PC-9 (cell line): ENCODE measurements at regions of chr9 and their contacts with region 1.

Region 1: DNA sequence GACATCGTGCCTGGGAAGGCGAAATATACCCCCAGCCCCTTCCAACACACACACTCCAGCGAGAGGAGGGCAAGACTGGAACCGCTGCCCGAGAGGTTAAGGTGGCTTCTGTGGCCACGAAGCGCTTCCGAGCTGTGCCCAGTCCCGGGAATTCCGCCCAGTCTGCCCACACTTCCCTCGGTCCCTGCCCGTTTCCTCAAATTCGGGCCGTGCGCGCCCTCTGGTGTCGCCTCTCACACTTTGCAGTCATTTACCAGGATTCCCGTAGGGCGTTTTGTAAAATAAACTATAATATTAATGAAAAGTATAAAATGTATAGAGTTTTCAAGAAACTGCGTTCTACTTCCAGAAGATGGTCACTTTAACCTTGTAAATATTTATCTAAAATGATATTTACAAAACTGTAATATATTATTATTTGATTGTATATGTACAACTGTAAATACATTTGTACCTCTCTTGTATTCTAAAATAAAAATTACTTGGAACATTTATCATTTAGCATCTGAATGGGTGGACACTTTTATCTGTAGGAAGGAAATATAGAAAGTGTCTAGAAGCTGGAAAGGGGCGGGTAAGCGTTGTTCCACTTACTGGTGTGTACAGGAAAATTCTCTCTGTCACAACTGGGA is 11.0 kb upstream of the EXOSC2 start:
- DNase-seq: peak; percentile 63 to 83
- H3K4me3 ChIP-seq: peak overlapping the region; percentile 76
- H3K27ac ChIP-seq: no peak overlapping the region
- H3K4me1 ChIP-seq: peaks cover 6% of the 10 kb centered on the region
- H3K27me3 ChIP-seq: no peaks in the 10 kb centered on the region
- CTCF ChIP-seq: peak; percentile 84

Region 2: DNA sequence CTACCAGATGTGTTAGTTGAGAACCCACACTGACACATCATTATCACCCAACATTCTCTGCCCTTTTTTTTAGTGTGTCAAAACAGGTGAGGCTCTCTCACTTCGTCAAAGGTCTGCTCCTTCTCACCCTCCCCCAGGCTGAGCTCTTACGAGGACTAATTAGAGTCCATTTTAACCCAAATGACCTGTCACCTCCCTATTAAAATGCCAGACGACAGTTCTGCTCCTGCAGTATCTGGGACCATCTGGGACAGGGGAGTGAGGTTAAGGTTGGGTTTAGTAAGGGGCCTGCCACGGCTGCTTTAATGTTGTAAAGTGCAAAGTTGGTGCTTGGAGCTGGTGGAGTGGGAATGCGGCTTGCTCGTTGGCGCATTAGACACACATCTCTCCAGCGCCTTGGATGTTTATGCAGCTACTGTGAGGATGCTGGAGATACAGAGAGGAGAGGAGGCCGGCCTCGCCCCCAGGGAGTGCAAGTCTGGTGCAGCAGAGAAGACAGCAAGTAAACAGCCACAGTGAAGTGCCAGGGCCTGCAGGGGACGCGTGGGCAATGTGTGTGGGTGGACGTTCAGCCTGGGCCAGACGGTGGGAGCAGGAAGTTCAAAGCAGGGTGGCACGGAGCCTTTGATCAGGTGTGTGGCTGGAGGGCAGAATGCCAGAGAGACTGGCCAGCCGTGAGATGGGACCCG is 1157.9 kb before region 1 on chr9:
- CTCF ChIA-PET with region 1: interaction called, 17 read pairs
- POLR2A ChIA-PET with region 1: no interaction called
- intact Hi-C with region 1: no loop called
- DNase-seq: no peak
- H3K4me3 ChIP-seq: no peak overlapping the region
- H3K27ac ChIP-seq: no peak overlapping the region
- H3K4me1 ChIP-seq: no peaks in the 10 kb centered on the region
- H3K27me3 ChIP-seq: no peaks in the 10 kb centered on the region
- CTCF ChIP-seq: no peak

Region 3: DNA sequence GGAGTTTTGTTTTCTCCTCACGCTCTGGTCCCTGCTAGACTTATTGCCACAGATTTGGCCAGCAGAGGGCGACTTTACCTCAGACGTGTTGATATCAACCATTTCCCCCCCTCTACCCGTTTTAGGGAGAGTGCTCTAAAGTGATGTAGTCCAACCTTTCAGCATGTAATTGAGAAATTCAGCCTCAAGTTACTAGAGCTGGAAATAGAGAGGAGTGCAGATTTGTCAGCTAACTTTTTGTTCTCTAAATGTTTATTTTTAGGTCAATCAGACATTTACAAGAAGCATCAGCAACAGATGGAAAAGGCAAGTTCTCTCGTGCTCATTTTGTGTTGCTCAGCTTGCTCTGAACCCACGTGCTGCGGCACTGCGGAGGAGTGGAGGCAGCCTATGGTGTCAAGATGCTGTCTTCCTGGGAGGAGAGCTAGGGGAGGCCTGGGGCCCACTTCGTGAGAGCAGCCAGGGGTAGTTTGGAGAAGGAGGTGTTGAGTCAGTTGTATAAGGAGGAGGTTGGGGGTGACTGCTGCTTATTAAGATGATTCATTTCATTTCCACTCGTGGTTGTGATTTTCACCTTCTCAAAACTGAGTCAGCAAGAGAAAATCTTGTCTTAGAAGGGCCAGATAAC is 575.3 kb before region 1 on chr9:
- CTCF ChIA-PET with region 1: no interaction called
- POLR2A ChIA-PET with region 1: no interaction called
- intact Hi-C with region 1: loop called (anchors 1 kb)
- DNase-seq: peak in 1 of 2 experiments; percentile 69
- H3K4me3 ChIP-seq: no peak overlapping the region
- H3K27ac ChIP-seq: no peak overlapping the region
- H3K4me1 ChIP-seq: no peaks in the 10 kb centered on the region
- H3K27me3 ChIP-seq: no peaks in the 10 kb centered on the region
- CTCF ChIP-seq: peak; percentile 89

Region 4: DNA sequence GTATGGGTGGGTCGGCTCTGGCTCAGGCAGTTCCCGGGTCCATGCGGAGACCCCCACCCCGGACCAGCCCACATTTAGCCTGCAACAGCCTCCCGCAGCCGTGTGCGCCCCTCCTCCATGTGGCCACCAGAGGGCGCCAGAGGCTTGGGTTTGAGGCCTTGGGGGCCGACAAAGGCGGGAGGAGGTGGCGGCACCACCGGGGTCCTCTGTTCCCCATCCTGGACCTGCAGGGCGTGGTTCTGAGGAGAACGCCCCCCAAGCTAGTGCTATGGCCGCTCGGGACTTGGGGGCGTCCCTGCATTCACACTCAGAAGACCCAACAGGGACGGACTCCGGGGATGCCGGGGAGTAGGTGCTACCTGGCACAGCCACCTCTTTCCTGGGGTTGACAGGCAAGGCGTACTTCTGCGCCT is 221.4 kb before region 1 on chr9:
- CTCF ChIA-PET with region 1: interaction called, 6 read pairs
- POLR2A ChIA-PET with region 1: no interaction called
- intact Hi-C with region 1: loop called (anchors 1 kb)
- DNase-seq: peak in 1 of 2 experiments; percentile 55
- H3K4me3 ChIP-seq: no peak overlapping the region
- H3K27ac ChIP-seq: no peak overlapping the region
- H3K4me1 ChIP-seq: no peaks in the 10 kb centered on the region
- H3K27me3 ChIP-seq: no peaks in the 10 kb centered on the region
- CTCF ChIP-seq: peak; percentile 93

Region 5: DNA sequence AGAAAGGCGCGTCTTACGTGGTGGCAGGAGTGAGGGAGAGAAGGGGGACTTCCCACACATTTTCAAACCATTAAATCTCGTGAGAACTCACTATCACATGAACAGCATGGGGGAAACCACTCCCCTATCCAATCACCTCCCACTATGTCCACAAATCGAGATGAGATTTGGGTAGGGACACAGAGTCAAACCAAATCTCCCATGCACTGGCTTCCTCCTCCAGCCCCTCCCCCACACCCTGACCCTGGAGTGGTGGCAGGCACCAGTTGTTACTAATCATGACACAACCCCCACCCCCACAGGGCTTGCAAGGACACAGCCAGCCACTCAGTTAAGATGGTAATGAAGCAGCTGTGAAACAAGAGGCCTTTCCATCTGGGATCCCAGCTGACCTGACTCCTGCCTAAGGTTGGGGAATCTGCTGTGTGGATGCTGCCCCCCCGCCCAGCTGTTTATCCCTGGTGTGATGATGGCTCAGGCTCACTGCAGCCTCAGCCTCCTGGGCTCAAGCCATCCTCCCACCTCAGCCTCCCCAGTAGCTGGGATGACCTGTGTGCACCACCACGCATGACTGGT is 160.3 kb before region 1 on chr9:
- CTCF ChIA-PET with region 1: no interaction called
- POLR2A ChIA-PET with region 1: no interaction called
- intact Hi-C with region 1: no loop called
- DNase-seq: no peak
- H3K4me3 ChIP-seq: no peak overlapping the region
- H3K27ac ChIP-seq: no peak overlapping the region
- H3K4me1 ChIP-seq: no peaks in the 10 kb centered on the region
- H3K27me3 ChIP-seq: no peaks in the 10 kb centered on the region
- CTCF ChIP-seq: no peak

Region 6: DNA sequence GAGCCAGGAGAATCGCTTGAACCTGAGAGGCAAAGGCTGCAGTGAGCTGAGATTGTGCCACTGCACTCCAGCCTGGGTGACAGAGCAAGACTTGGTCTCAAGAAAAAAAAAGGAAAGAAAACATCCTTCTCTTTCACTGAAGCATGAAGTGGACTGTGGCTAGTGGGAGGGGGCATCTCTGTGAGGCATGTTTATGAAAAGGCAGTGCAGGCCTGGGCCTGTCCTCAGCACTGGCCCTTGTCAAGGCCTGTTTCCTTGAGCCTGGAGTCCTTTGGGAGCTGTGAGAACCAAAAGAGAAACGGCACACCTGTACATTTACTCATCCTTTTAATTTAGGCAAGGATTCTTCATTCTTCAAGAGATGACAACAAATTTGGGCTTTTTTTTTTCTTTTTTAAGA is 121.5 kb before region 1 on chr9:
- CTCF ChIA-PET with region 1: interaction called, 11 read pairs
- POLR2A ChIA-PET with region 1: no interaction called
- intact Hi-C with region 1: no loop called
- DNase-seq: peak in 1 of 2 experiments; percentile 30
- H3K4me3 ChIP-seq: no peak overlapping the region
- H3K27ac ChIP-seq: no peak overlapping the region
- H3K4me1 ChIP-seq: peaks cover 7% of the 10 kb centered on the region
- H3K27me3 ChIP-seq: no peaks in the 10 kb centered on the region
- CTCF ChIP-seq: no peak

Region 7: GRCh38 chr9:130693426-130694191 is 11.0 kb after region 1 on chr9 and contains the start of gene EXOSC2:
- CTCF ChIA-PET with region 1: interaction called, 3 read pairs
- POLR2A ChIA-PET with region 1: interaction called, 16 read pairs
- intact Hi-C with region 1: no loop called
- DNase-seq: peak; percentile 90 to 95
- H3K4me3 ChIP-seq: peak within 1 kb of the TSS; percentile 88
- H3K27ac ChIP-seq: no peak within 1 kb of the TSS
- H3K4me1 ChIP-seq: peaks cover 22% of the 10 kb centered on the region
- H3K27me3 ChIP-seq: no peaks in the 10 kb centered on the region
- CTCF ChIP-seq: no peak
- total RNA-seq, gene EXOSC2: 49.5 and 52.0 TPM in 2 replicates